ENCODE measurements at regions of chr9 and their contacts with region 1.

Region 1: DNA sequence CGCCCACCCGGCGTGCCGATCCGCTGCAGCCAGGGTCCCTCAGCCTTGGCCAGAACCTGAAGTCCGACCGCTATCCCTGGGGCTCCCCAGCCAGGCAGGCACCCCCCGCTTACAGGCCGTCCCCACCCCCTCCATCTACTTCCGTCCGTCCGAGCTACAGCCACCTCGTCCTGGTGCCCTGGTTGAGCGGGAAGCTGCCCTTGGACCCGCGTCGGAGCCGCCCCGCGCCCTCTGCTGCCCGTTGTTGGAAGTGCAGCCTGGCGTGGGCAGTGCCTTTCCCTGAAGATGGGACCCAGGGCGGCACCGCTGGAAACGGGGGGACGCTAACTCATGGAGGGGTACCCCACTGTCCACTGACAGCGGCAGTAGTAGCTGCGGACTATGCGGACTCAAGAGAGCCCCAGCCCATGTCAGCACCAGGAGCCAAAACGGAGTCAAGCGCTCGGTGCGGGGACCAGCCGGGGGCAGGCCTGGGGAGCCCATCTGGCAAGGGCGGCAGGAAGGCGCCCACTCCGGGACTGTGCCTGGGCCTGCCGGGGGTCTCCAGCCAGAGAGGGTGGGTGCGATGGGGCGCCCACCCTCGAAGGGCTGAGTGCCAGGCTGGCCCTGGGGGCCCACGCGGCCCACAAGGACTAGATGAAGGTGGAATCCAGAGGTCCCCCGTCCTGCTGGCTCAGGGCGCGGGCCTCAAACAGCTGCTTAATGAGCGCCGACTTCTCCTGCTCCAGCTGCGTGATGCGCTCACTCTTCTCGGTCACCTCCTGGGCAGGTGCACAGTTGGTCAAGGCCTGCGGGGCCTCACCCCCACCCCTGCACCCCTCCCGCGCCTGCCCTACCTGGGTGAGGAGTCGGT is 6.1 kb downstream of the SAPCD2 start:
- DNase-seq: peak; percentile 71
- H3K27ac ChIP-seq: peak overlapping the region; percentile 85
- CTCF ChIP-seq: peak; percentile 100

Region 2: DNA sequence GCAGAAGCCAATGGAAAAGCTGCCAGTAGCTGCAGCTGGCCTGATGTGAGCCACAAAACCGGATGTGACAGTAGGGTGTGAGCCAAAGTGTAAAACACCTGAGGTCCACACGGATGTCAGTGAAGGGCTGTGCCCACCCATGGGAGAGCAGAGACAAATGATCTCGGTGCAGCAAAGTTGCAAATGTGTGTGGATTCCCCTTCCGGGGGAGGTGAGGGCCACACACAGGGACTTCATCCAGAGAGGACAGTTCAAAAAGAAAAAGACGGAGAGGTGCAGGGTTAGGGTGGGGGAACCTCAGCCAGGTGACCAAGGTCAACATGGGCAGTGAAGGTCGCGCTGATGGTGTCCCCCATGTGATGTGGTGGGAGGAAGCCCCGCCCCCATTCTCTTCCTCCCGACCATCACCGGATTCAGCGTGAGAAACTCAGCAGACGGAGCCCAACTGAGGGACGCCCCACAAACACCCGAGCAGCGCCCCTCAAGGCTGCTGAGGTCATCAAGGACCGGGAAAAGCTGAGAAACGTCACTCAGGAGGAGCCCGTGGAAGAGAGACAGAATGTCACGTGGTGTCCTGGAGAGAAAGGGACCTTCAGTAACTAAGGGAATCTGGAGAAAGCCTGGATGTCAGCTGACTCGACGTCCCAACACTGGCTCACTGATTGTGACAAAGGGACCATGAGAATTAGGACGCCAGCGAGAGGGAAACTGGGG is 98.3 kb before region 1 on chr9:
- CTCF ChIA-PET with region 1: no interaction called
- POLR2A ChIA-PET with region 1: no interaction called
- DNase-seq: no peak
- H3K27ac ChIP-seq: no peak overlapping the region
- CTCF ChIP-seq: no peak

Region 3: GRCh38 chr9:137077010-137077747 is 12.9 kb after region 1 on chr9 and contains the start of gene UAP1L1:
- CTCF ChIA-PET with region 1: interaction called, 10 read pairs
- POLR2A ChIA-PET with region 1: interaction called, 6 read pairs
- DNase-seq: no peak
- H3K27ac ChIP-seq: peak within 1 kb of the TSS; percentile 97
- CTCF ChIP-seq: no peak

Region 4: DNA sequence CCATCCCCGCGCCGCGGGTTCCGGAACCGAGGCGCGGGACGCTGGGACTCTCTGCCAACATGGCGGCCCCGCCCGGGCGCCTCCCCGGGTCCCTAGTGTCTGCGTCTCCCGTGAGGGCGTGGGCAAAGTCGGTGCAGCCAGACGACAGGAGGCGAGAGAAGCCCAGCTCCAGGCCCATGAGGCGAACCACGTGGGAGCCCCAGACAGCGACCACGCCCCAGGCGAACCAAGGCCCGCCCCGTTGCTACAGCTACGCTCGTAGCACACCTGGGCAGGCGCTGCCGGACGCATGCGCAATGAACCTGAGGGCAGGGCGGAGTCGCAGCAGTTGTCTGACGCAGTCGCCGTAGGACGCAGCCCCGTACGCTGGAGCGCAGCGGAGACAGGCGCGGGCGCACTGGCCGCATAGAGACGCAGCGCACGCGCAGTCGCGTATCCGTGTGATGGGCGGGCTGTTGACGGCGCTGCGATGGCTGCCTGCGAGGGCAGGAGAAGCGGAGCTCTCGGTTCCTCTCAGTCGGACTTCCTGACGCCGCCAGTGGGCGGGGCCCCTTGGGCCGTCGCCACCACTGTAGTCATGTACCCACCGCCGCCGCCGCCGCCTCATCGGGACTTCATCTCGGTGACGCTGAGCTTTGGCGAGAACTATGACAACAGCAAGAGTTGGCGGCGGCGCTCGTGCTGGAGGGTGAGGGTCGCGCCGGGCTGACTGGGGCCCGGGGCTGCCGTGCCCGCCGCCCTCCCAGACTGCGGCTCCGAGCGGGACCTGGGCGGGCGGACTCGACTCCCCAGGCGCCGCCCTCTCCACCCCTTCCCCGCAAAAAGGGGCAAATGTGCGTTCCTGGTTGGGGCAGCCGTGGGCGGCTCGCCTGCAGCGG is 22.5 kb after region 1 on chr9 and contains the start of gene MAN1B1:
- CTCF ChIA-PET with region 1: interaction called, 15 read pairs
- POLR2A ChIA-PET with region 1: interaction called, 15 read pairs
- DNase-seq: peak; percentile 100
- H3K27ac ChIP-seq: peak within 1 kb of the TSS; percentile 97
- CTCF ChIP-seq: no peak

Measured in RWPE1 (cell line).